ENCODE measurements at regions of chr11 and their contacts with region 1.

Region 1: GRCh38 chr11:68271781-68272608 is at the start of gene C11orf24:
- DNase-seq: peak; percentile 83 to 95 (median 92)
- ATAC-seq: peak; percentile 89 to 90
- H3K4me3 Mint-ChIP-seq: peak within 1 kb of the TSS; percentile 87 to 99 (median 96)
- H3K27ac Mint-ChIP-seq: peak within 1 kb of the TSS; percentile 96 to 98 (median 98)
- H3K4me1 Mint-ChIP-seq: peaks cover 17 to 59% (median 38%) of the 10 kb centered on the region in 4 donors
- H3K27me3 Mint-ChIP-seq: no peaks in the 10 kb centered on the region
- polyA plus RNA-seq, gene C11orf24: 6.1 to 10.4 (median 6.6) TPM

Region 2: DNA sequence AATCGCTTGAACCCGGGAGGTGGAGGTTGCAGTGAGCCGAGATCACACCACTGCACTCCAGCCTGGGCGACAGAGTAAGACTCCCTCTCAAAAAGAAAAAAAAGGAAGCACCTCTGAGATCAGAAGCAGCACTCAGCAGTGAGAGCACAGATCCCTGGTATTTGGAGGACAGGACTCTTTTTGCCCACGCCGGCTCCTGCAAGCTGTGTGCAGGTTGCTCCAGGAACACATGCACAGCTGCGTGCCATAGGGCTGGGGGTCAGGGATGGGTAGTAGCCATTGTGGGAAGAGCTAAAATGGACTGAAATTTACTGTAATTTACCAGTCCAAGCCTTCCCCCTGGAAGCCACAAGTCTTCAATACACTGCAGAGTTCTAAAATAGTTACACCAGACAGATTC is 36.3 kb before region 1 on chr11:
- POLR2A ChIA-PET with region 1: no interaction called
- DNase-seq: no peak
- ATAC-seq: no peak
- H3K4me3 Mint-ChIP-seq: no peak overlapping the region
- H3K27ac Mint-ChIP-seq: peak overlapping the region in 1 of 10 donors; percentile 62
- H3K4me1 Mint-ChIP-seq: peaks cover 0 to 2% (median 0%) of the 10 kb centered on the region in 4 donors
- H3K27me3 Mint-ChIP-seq: peaks cover 5 to 27% (median 16%) of the 10 kb centered on the region in 5 donors

Region 3: DNA sequence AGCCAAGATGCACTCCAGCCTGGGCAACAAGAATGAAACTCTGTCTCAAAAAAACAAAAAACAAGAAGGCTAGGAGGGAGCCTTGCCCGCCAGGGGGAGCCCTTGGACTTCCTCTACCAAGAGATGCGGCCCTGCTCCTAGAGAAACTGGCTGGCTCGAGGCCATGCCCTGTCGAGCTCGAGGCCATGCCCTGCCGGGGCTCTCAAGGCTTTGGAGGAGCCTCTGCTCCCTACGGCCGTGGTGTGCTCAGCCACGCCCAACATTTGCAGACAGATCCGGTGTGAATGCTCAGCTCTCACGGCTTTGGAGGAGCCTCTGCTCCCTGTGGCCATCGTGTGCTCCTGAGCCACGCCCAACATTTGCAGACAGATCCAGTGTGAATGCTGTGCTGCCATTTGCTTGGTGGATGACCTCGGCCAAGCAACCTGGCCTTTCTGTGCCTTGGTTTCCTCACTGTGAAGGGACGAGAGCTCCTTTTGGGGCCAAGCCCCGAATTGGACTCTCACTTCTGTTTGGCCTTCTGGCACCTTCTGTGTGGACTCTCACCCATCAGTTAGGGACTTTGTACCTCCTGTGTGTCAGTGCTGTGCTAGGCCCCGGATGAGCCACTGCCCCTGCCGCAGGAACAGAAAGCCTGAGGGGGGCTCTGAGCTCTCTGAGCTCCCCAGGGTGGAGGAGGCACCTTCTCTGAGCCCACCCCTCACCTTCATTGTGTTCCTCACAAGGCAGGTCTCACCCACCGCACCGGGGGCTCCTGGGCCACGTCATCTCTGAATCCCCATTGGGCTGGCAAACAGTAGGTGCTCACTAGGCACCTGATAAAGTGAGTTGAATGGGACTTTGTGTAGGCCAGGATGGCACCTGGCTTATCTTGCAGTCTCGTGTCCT is 14.3 kb before region 1 on chr11:
- POLR2A ChIA-PET with region 1: interaction called, 14 read pairs
- DNase-seq: peak; percentile 82 to 96 (median 91)
- ATAC-seq: peak; percentile 95 to 98
- H3K4me3 Mint-ChIP-seq: peak overlapping the region in 1 of 10 donors; percentile 42
- H3K27ac Mint-ChIP-seq: peak overlapping the region in 9 of 10 donors; percentile 49 to 85 (median 68)
- H3K4me1 Mint-ChIP-seq: peaks cover 0 to 7% (median 5%) of the 10 kb centered on the region in 4 donors
- H3K27me3 Mint-ChIP-seq: no peaks in the 10 kb centered on the region

Region 4: DNA sequence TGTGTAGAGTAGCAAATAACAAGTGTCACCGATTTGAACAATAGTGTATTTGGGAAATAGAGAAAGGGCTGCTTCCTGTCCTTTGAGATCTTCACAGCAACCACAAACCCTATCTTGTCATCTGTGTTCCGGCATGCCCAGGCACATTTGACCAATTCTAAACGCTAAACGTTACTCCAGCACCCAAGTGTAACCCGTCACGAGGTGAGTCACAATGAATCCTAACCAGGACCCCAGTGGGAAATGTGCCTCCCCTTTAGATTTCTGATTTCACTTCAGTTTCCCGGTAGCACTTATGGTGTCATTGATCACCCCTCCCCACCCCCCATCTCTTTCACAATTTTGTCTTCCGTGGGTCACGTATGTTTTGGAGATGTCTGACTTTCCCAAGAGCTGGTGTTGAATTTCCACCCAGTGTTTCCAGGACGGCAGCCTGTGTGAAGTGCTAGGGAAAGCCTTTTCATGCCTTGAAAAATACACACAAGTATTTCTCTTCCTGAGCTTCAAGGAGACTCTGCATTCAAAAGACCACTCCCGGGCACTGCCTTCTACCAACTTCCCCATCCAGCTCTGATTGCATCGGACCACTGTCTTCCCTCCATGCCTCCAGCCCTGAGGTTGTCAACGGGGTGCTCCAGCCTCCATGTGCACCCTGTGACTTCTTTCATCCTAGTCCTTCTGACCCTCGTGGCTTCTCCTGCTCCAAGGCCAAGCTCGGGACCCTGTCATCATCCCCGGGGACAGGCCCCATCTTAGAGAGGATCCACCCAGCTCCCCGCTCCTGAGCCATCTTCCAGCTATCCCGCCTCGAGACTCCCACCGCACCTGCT is 10.4 kb after region 1 on chr11:
- POLR2A ChIA-PET with region 1: interaction called, 18 read pairs
- DNase-seq: peak in 6 of 10 donors; percentile 6 to 39 (median 18)
- ATAC-seq: peak; percentile 72 to 82
- H3K4me3 Mint-ChIP-seq: peak overlapping the region; percentile 54 to 79 (median 72)
- H3K27ac Mint-ChIP-seq: peak overlapping the region in 8 of 10 donors; percentile 21 to 90 (median 66)
- H3K4me1 Mint-ChIP-seq: peaks cover 19 to 29% (median 20%) of the 10 kb centered on the region in 4 donors
- H3K27me3 Mint-ChIP-seq: peaks cover 0 to 13% (median 3%) of the 10 kb centered on the region in 5 donors

Region 5: GRCh38 chr11:68297812-68298658 is 26.0 kb after region 1 on chr11:
- POLR2A ChIA-PET with region 1: interaction called, 21 read pairs
- DNase-seq: peak; percentile 42 to 81 (median 72)
- ATAC-seq: peak; percentile 92 to 99
- H3K4me3 Mint-ChIP-seq: peak overlapping the region in 1 of 10 donors; percentile 19
- H3K27ac Mint-ChIP-seq: peak overlapping the region in 2 of 10 donors; percentile 48 to 51
- H3K4me1 Mint-ChIP-seq: peaks cover 5 to 23% (median 6%) of the 10 kb centered on the region in 4 donors
- H3K27me3 Mint-ChIP-seq: no peaks in the 10 kb centered on the region